ENCODE measurements at regions of chr13 and their contacts with region 1.

Region 1: DNA sequence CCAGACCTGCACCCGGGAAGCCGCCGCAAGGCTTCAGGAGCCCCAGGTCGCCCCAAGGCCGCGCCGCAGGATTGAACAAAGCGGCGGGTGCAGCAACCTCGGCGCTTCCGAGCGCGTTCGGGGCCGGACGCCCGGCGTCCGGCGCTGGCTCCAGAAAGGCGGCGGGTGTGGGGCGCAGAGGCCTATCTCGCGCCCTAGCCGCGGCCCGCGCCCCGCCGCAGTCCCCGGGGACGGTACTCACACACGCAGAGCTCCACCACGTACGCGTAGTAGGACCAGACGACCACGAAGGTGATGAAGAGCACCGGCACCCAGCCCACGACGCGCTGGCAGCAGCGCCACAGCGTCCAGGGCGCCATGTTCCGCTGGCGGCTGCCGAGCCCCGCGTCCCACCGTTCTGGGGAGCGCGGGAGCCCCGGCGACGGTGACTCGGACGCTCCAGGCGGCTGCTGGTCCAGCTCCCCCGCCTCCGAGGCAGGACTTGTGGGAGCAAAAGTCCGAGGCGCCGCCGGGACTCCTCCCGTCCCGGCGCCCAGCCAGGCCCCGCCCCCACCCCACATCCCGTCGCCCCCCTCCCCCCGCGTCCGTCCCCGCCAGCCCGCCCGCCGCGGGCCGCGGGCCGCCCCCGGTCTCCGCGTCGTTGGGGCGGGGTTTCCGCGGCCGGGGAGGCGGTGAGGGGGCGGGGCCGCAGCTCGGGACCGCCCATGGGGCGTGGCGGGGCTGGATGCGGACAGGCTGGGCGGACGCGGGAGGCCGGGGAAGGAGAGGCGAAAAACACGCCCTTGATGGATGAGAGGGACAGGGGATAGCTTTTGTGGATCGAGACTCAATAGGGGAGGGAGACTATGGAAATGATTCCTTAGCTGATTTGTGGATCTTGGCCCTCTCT is at the start of gene ZDHHC20:
- DNase-seq: peak; percentile 84
- H3K4me3 Mint-ChIP-seq: peak within 1 kb of the TSS; percentile 88
- H3K27ac Mint-ChIP-seq: peak within 1 kb of the TSS; percentile 75
- H3K4me1 Mint-ChIP-seq: peaks cover 22% of the 10 kb centered on the region
- H3K27me3 Mint-ChIP-seq: no peaks in the 10 kb centered on the region
- CTCF ChIP-seq: no peak
- total RNA-seq, gene ZDHHC20: 33.5 and 42.2 TPM in 2 replicates

Region 2: DNA sequence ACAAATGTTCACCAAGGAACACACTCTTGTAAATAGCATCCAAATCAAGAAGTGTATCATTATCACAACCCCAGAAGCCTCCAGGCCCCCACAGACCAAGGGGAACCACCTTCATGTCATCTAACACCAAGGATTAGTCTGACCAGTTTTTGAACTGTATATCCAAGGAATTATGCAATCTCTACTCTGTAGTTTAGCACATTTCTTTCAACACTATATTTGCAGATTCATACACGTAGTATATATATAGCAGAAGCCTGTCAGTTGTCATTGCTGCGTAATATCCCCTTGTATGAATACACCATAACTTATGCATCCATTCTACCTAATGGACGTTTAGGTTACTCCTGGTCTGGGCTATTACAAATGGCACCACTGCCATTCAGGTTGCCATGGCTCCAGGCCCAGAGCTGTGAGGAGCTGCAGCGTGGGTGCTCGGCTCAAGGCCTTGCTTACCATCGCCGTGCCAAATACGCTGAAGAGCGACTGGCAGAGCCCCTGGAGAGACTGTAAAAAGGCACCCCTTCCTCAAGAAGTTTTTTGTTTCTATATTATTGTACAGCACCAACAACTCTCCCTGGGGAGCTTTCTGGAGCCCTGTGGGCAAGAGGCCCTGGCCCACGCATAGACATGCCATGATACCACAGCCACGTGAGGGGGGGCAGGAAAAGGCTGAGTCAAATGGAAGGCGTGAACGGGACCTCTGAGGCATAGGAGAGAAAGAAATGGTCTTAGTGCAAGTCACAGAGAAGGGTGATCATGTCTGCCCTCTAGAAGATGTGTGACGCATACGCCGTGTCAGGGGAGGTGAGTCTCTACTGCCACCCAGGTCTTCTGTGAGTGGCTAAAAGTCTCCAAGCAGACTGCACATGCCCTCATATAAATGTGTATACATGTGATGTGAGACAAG is 408.5 kb before region 1 on chr13:
- CTCF ChIA-PET with region 1: no interaction called
- POLR2A ChIA-PET with region 1: no interaction called
- intact Hi-C with region 1: no loop called
- DNase-seq: no peak
- H3K4me3 Mint-ChIP-seq: no peak overlapping the region
- H3K27ac Mint-ChIP-seq: no peak overlapping the region
- H3K4me1 Mint-ChIP-seq: peaks cover 30% of the 10 kb centered on the region
- H3K27me3 Mint-ChIP-seq: no peaks in the 10 kb centered on the region
- CTCF ChIP-seq: no peak

Region 3: DNA sequence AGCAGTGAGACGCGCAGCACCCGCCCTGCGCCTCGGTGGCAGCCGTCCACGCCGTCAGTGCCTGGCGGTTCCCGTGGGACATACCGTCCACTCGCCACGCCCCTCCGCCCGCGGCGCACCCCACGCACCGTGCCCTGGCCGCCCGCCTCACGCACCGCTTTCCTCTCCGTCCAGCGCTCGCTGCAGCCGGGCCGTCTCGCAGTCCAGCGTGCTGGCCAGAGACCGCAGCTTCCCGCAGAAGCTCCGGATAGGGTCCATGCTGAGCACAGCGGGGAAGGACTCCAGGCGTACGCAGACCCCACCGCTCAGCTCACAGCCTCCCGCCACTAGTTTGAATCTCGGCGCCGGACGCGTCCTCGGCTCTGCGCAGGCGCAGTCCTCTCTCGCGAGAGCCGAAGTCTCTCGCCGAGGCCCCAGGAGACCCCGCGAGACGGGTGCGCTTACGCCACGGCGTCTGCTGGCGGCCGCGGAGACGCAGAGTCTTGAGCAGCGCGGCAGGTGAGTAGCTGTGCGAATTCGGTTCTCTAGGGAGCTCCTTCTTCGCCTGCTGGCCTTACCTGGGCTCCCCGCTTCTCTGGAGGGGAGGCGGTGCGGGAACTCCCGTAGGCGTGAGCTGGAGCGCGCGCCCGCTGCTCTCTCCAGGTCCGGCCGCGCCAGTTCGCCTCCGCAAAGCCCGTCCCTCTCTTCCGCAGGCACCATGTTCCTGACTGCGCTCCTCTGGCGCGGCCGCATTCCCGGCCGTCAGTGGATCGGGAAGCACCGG is 282.7 kb before region 1 on chr13 and contains the starts of genes MRPL57 and SKA3:
- CTCF ChIA-PET with region 1: no interaction called
- POLR2A ChIA-PET with region 1: interaction called, 13 read pairs
- intact Hi-C with region 1: no loop called
- DNase-seq: peak; percentile 92
- H3K4me3 Mint-ChIP-seq: peak within 1 kb of the TSS; percentile 99
- H3K27ac Mint-ChIP-seq: peak within 1 kb of the TSS; percentile 90
- H3K4me1 Mint-ChIP-seq: no peaks in the 10 kb centered on the region
- H3K27me3 Mint-ChIP-seq: no peaks in the 10 kb centered on the region
- CTCF ChIP-seq: no peak
- total RNA-seq, gene MRPL57: 16.8 and 20.8 TPM in 2 replicates
- total RNA-seq, gene SKA3: 5.9 and 16.4 TPM in 2 replicates

Region 4: DNA sequence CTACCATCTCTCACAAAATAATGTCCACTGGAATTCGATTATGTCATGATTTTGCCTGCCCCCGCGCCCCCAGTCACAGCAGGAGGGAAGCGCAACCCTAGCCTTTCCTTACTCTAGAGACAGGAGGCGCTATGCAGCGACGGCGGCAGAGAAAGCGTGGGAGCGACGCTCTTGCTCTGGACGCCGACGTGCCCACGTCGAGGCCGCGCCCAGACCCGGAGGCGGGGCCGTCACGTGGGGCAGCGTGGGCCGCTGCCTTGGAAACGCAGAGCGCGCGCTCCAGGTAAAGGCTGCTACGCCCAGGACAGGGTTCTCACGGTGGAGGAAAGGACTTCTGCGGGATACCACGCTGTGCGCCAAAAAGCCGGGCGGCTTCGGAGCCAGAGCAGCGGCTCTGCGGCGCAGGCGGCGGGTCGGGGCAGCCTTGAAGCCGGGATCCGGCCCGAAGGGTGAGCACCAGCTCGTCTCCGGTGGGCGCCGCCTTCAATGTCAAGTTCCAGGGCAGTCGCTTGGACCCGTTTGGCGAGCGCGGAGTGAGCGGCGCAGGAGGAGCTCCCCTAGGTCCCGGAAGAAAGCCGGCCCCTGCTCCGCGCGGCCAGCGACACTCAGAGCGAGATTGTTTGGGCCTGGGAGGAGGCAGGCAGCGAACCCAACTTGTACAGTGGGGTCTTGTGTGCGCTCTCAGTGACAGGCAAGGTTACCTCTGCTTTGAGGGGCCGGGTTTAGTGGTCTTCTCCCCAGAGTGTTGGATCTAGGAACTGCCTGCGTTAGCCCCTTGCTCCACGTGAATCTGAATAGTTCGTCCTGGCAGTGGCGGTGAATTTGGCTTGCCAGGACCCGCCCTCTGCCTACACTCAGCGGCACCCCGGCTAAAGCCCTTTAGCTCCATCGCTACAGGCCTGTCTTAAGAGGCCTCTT is 160.9 kb before region 1 on chr13:
- CTCF ChIA-PET with region 1: interaction called, 5 read pairs
- POLR2A ChIA-PET with region 1: interaction called, 43 read pairs
- intact Hi-C with region 1: loop called (anchors 1 kb)
- DNase-seq: peak; percentile 91
- H3K4me3 Mint-ChIP-seq: peak overlapping the region; percentile 88
- H3K27ac Mint-ChIP-seq: peak overlapping the region; percentile 82
- H3K4me1 Mint-ChIP-seq: peaks cover 7% of the 10 kb centered on the region
- H3K27me3 Mint-ChIP-seq: no peaks in the 10 kb centered on the region
- CTCF ChIP-seq: peak; percentile 83

Region 5: GRCh38 chr13:21435710-21436151 is 23.3 kb before region 1 on chr13:
- CTCF ChIA-PET with region 1: interaction called, 4 read pairs
- POLR2A ChIA-PET with region 1: interaction called, 21 read pairs
- intact Hi-C with region 1: loop called (anchors 2 kb)
- DNase-seq: peak; percentile 86
- H3K4me3 Mint-ChIP-seq: peak overlapping the region; percentile 59
- H3K27ac Mint-ChIP-seq: peak overlapping the region; percentile 50
- H3K4me1 Mint-ChIP-seq: peaks cover 29% of the 10 kb centered on the region
- H3K27me3 Mint-ChIP-seq: no peaks in the 10 kb centered on the region
- CTCF ChIP-seq: no peak

Region 6: DNA sequence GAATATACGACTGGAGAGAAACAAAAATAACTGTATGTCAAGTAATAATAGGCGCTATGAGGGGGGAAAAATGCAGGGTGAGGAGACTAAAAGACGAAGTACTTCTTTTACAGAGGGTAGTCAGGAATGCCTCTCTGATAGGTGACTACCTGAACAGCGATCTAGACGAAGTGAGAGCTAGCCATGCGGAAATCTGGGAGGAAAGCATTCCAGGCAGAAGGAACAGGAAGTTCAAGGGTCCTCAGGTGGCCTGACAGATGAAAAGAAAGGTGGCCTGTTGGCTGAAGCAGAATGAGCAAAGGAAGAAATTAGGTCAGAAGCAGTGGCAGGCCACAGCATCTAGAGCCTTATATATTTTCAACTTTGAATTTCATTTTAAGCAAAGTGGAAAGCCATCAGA is 13.3 kb before region 1 on chr13:
- CTCF ChIA-PET with region 1: no interaction called
- POLR2A ChIA-PET with region 1: interaction called, 13 read pairs
- intact Hi-C with region 1: no loop called
- DNase-seq: no peak
- H3K4me3 Mint-ChIP-seq: no peak overlapping the region
- H3K27ac Mint-ChIP-seq: no peak overlapping the region
- H3K4me1 Mint-ChIP-seq: no peaks in the 10 kb centered on the region
- H3K27me3 Mint-ChIP-seq: no peaks in the 10 kb centered on the region
- CTCF ChIP-seq: no peak